Endothelial cell of umbilical vein (primary cell): ENCODE measurements at regions of chr7 and their contacts with region 1.

Region 1: GRCh38 chr7:100889761-100890634 is 483 bp upstream of the UFSP1 start:
- DNase-seq: peak; percentile 88
- H3K4me3 ChIP-seq: peak overlapping the region; percentile 15 to 38 (median 37)
- H3K27ac ChIP-seq: no peak overlapping the region
- H3K4me1 ChIP-seq: peaks cover 40% of the 10 kb centered on the region
- H3K27me3 ChIP-seq: peaks cover 0 to 2% of the 10 kb centered on the region in 2 experiments
- CTCF ChIP-seq: no peak
- POLR2A ChIP-seq: no peak

Region 2: DNA sequence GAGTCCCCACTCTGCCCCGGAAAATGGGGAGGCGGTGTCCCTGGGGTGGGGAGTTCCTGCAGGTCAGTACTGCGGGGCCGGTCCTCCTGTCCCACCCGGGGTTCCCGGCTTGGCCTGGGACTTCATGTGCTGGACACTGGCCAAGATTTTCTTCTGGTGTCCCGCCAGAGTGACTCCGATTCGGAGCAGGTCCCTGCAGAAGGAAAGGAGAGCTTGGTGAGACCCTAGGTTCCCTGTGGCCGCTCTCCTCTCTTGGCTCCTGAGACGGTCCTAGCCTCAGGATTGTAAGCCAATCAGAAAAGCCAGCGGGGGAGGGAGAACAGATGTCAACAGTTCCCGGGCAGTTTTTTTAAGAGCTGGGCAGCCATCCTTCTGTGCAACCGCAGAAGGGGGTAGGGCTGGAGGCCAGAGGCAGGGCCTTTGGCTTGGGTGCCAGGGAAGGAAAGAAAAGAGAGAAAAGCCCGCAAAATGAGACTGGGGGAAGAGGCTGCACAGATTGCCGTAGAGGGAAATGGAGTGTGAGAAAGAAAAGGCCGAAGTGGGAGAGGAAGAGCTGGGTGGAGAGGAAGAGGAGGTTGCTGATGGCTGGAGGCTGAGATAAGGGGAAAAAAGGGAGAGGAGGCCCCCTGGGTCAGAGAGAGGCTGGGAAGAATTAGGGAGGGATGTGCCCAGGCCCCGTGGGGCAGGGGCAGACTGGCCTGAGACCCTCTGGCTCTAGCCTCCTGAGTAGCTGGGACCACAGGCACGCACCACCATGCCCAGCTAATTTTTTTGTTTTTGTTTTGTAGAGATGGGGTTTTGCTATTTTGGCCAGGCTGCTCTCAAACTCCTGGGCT is 86.4 kb before region 1 on chr7:
- CTCF ChIA-PET with region 1: interaction called, 12 read pairs
- POLR2A ChIA-PET with region 1: interaction called, 3 read pairs
- dilution Hi-C with region 1: no loop called
- intact Hi-C with region 1: no loop called
- DNase-seq: peak; percentile 65
- H3K4me3 ChIP-seq: no peak overlapping the region
- H3K27ac ChIP-seq: no peak overlapping the region
- H3K4me1 ChIP-seq: peaks cover 44% of the 10 kb centered on the region
- H3K27me3 ChIP-seq: no peaks in the 10 kb centered on the region
- CTCF ChIP-seq: no peak
- POLR2A ChIP-seq: no peak

Region 3: DNA sequence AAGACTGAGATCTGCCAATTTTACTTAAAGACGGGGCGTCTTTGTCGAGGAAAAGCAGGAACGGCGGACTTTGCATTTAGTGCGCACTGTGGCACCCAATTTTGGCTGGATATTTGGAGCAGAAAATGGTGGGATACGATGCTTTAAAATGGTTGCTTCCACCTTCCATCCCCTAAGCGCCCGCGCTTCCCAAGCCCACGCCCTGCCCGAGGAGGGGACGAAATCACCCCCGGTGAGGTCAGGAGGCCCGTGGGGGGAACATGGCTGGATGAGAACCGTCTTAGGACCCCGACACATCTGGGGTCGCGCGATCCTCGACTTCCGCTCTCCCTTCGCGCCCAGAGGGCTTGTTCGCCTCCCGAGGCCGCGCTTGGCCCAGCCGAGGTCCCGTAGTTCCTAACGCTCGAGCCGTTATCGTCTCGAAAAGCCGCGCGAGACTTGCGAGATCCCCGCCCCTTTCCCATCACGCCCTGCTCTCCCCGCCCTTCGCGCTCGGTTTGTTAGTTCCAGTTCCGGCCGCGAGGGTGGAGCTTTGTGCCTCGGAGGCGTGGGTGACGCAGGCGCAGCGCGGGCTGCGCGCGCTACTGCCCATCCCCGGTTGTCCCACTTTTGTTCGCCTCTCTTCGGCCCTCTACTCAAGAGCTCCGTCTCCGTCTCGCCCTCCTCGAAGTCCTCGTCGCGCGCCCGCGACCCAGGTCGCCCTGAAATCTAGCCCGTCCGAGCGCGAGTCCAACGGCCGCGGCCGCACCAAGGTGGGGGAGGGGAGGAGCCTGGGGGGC is 15.2 kb before region 1 on chr7 and contains the start of gene SRRT:
- CTCF ChIA-PET with region 1: interaction called, 7 read pairs
- POLR2A ChIA-PET with region 1: interaction called, 27 read pairs
- dilution Hi-C with region 1: no loop called
- intact Hi-C with region 1: loop called (anchors 1 kb)
- DNase-seq: peak; percentile 97
- H3K4me3 ChIP-seq: peak within 1 kb of the TSS; percentile 72 to 84 (median 79)
- H3K27ac ChIP-seq: peak within 1 kb of the TSS; percentile 89
- H3K4me1 ChIP-seq: peaks cover 19% of the 10 kb centered on the region
- H3K27me3 ChIP-seq: no peaks in the 10 kb centered on the region
- CTCF ChIP-seq: peak in 1 of 2 donors; percentile 31
- POLR2A ChIP-seq: peak; percentile 91
- total RNA-seq, gene SRRT: 199 and 202 TPM in 2 replicates

Region 4: GRCh38 chr7:101058355-101058754 is 168.4 kb after region 1 on chr7:
- CTCF ChIA-PET with region 1: interaction called, 44 read pairs
- POLR2A ChIA-PET with region 1: no interaction called
- dilution Hi-C with region 1: no loop called
- intact Hi-C with region 1: no loop called
- DNase-seq: peak; percentile 53
- H3K4me3 ChIP-seq: no peak overlapping the region
- H3K27ac ChIP-seq: no peak overlapping the region
- H3K4me1 ChIP-seq: no peaks in the 10 kb centered on the region
- H3K27me3 ChIP-seq: peaks cover 3 to 5% of the 10 kb centered on the region in 2 experiments
- CTCF ChIP-seq: no peak
- POLR2A ChIP-seq: no peak

Region 5: DNA sequence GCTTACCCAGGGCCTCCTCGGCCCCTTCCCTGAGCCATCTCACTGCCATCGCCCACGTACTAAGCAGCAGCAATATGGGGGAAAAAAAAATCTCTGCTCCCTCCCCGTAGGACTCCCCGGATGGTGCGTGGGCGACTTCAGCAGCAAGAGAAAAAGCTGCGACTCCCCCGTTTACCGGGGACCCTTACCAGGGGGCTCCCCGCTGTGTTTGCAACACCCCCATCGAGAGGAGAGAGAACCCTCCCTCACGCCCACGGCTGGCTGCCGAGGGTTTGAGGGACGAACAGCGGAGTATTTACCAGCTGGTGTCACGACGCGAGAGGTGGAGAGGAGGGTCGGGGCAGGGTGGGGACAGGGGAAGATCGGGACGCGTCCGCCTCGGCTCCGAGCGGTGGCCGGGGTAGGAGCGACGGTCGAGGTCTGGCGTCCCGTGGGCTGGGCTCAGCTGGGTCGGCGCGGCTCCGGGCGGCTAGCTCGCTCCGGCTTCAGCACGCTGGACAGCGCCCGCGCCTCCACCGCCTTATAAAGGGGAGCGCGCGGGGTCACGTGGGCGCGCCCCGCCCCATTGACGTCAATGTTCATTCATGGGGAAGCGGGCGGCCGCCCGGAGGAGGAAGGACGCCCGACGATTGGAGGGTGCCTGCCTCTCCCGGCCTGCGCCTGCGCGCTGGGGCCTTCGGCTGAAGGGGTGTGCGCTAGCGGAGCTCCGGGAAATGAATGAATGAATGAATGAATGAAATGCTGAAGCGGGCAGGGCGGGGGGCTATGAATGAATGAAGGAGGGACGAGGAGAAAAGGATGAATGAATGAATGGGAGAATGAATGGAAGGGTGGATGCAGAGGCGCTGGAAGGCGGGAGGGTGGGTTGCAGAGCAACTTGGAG is 275.3 kb after region 1 on chr7 and contains the start of gene VGF:
- CTCF ChIA-PET with region 1: no interaction called
- POLR2A ChIA-PET with region 1: no interaction called
- dilution Hi-C with region 1: no loop called
- intact Hi-C with region 1: loop called (anchors 10 kb)
- DNase-seq: peak; percentile 86
- H3K4me3 ChIP-seq: no peak within 1 kb of the TSS
- H3K27ac ChIP-seq: no peak within 1 kb of the TSS
- H3K4me1 ChIP-seq: peaks cover 16% of the 10 kb centered on the region
- H3K27me3 ChIP-seq: peaks cover 52 to 58% of the 10 kb centered on the region in 2 experiments
- CTCF ChIP-seq: no peak
- POLR2A ChIP-seq: no peak
- total RNA-seq, gene VGF: not detected in 2 replicates